B cell (primary cell): ENCODE measurements at regions of chr11 and their contacts with region 1.

Region 1: DNA sequence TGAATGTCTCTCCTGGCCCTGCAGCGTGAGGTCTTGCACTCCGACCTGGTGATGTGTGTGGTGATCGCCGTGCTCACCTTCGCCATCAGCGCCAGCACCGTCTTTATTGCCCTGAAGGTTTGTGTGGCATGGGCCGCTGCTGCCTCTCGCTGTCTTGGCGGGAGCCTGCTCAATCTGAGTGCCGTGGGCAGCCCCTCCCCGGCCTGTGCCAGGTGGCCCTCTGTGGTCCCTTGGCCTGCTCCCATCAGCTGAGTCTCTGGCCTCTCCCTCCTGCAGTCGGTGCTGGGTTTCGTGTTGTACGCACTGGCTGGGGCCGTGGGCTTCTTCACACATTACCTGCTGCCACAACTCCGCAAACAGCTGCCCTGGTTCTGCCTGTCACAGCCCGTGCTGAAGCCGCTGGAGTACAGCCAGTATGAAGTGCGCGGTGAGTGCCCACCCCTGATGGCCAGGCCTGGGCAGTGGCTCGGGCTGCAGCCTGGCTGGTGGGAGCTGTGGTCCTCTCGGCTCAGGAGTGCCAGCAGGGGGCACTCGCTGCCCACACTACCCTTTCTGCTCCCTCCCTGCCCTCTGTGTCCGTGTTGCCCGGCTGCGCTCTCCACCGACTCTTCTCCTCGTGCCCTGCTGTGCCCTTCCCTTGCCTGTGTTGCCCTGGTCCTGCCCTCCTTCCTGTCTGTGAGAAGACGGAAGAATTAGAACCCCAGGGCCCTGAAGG is 10.2 kb downstream of the PCNX3 start:
- DNase-seq: peak; percentile 84
- ATAC-seq: peak; percentile 95
- H3K4me3 ChIP-seq: no peak overlapping the region
- H3K4me3 Mint-ChIP-seq: no peak overlapping the region
- H3K27ac ChIP-seq: no peak overlapping the region
- H3K27ac Mint-ChIP-seq: peak overlapping the region; percentile 5
- H3K4me1 ChIP-seq: peaks cover 6 to 11% of the 10 kb centered on the region in 2 donors
- H3K4me1 Mint-ChIP-seq: peaks cover 12% of the 10 kb centered on the region
- H3K27me3 ChIP-seq: no peaks in the 10 kb centered on the region
- H3K27me3 Mint-ChIP-seq: no peaks in the 10 kb centered on the region
- CTCF ChIP-seq: peak; percentile 83

Region 2: DNA sequence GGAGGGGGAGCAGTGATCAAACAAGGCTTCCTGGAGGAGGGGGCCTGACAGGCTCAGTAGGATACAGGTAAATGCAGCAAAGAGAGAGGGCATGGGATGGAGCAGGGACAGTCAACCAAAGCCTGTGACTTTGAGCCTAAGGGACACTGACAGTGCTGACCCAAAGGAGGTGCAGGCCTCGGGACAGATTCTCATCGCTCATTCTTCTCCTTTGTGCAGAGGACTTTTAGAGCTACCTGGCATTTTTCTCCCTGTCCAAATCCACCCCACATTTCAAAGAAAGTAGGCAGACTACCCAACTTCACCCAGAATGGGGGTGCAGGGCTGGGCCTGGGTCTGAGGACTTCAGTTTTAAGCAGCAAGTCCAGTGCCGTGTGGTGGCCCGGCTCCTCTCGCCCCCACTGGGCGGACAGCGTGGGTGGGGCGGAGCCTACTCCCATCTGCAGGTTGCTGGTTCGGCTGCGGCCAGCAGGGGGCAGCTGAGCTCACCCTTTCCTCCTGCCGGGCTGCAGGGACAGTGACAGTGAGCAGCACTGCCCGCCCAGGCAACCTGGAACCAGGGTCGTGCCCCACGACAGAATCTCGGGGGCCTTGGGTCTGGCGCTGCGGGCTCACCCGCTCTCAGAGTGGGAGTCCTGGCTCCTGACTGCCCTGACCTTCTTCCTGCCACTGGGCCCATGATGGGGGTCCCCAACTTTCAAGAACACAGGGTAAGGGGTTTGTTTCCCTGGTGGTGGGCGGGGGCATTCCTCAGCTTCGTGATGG is 209.5 kb before region 1 on chr11:
- CTCF ChIA-PET with region 1: no interaction called
- POLR2A ChIA-PET with region 1: no interaction called
- intact Hi-C with region 1: no loop called
- DNase-seq: peak; percentile 91
- ATAC-seq: peak; percentile 42
- H3K4me3 ChIP-seq: peak overlapping the region; percentile 43 to 86 (median 63)
- H3K4me3 Mint-ChIP-seq: peak overlapping the region; percentile 96
- H3K27ac ChIP-seq: peak overlapping the region; percentile 91 to 97
- H3K27ac Mint-ChIP-seq: peak overlapping the region; percentile 100
- H3K4me1 ChIP-seq: peaks cover 54 to 61% of the 10 kb centered on the region in 2 donors
- H3K4me1 Mint-ChIP-seq: peaks cover 58% of the 10 kb centered on the region
- H3K27me3 ChIP-seq: no peaks in the 10 kb centered on the region
- H3K27me3 Mint-ChIP-seq: no peaks in the 10 kb centered on the region
- CTCF ChIP-seq: peak; percentile 92

Region 3: GRCh38 chr11:65558002-65558931 is 67.5 kb before region 1 on chr11 and contains the start of gene LTBP3:
- CTCF ChIA-PET with region 1: no interaction called
- POLR2A ChIA-PET with region 1: no interaction called
- intact Hi-C with region 1: no loop called
- DNase-seq: peak; percentile 52
- ATAC-seq: peak; percentile 60
- H3K4me3 ChIP-seq: peak within 1 kb of the TSS; percentile 22 to 62 (median 54)
- H3K4me3 Mint-ChIP-seq: peak within 1 kb of the TSS; percentile 81
- H3K27ac ChIP-seq: peak within 1 kb of the TSS; percentile 57 to 62
- H3K27ac Mint-ChIP-seq: peak within 1 kb of the TSS; percentile 68
- H3K4me1 ChIP-seq: peaks cover 11 to 33% of the 10 kb centered on the region in 2 donors
- H3K4me1 Mint-ChIP-seq: peaks cover 28% of the 10 kb centered on the region
- H3K27me3 ChIP-seq: no peaks in the 10 kb centered on the region
- H3K27me3 Mint-ChIP-seq: peaks cover 3% of the 10 kb centered on the region
- CTCF ChIP-seq: no peak
- total RNA-seq, gene LTBP3: 69.0 and 69.7 TPM in 2 replicates

Region 4: GRCh38 chr11:65652511-65653231 is 26.9 kb after region 1 on chr11:
- CTCF ChIA-PET with region 1: interaction called, 41 read pairs
- POLR2A ChIA-PET with region 1: interaction called, 4 read pairs
- intact Hi-C with region 1: loop called (anchors 1 kb)
- DNase-seq: peak; percentile 98
- ATAC-seq: peak; percentile 89
- H3K4me3 ChIP-seq: peak overlapping the region; percentile 22 to 74 (median 69)
- H3K4me3 Mint-ChIP-seq: peak overlapping the region; percentile 96
- H3K27ac ChIP-seq: peak overlapping the region; percentile 90 to 93
- H3K27ac Mint-ChIP-seq: peak overlapping the region; percentile 98
- H3K4me1 ChIP-seq: peaks cover 22 to 44% of the 10 kb centered on the region in 2 donors
- H3K4me1 Mint-ChIP-seq: peaks cover 57% of the 10 kb centered on the region
- H3K27me3 ChIP-seq: no peaks in the 10 kb centered on the region
- H3K27me3 Mint-ChIP-seq: no peaks in the 10 kb centered on the region
- CTCF ChIP-seq: no peak

Region 5: DNA sequence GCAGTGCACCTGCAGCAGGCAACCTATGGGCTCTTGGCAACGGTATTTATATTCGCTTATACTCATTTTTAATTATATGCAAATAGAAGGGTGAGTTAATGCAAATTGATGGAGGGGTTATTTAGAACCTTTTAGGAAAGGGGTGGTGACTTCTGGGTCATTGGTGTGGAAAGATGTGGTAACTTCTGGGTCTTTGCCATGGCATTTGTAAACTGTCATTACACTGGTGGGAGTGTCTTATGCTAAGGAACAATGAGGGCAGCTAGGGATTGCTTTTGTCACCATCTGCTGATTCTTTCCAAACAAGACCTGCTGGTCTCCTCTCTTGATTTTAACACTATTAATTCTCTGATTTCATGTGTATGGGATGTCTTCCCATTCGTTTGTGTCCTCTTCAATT is 74.6 kb after region 1 on chr11:
- CTCF ChIA-PET with region 1: interaction called, 32 read pairs
- POLR2A ChIA-PET with region 1: no interaction called
- intact Hi-C with region 1: no loop called
- DNase-seq: peak; percentile 48
- ATAC-seq: peak; percentile 76
- H3K4me3 ChIP-seq: no peak overlapping the region
- H3K4me3 Mint-ChIP-seq: no peak overlapping the region
- H3K27ac ChIP-seq: no peak overlapping the region
- H3K27ac Mint-ChIP-seq: no peak overlapping the region
- H3K4me1 ChIP-seq: peaks cover 5 to 7% of the 10 kb centered on the region in 2 donors
- H3K4me1 Mint-ChIP-seq: peaks cover 9% of the 10 kb centered on the region
- H3K27me3 ChIP-seq: no peaks in the 10 kb centered on the region
- H3K27me3 Mint-ChIP-seq: peaks cover 3% of the 10 kb centered on the region
- CTCF ChIP-seq: no peak

Region 6: DNA sequence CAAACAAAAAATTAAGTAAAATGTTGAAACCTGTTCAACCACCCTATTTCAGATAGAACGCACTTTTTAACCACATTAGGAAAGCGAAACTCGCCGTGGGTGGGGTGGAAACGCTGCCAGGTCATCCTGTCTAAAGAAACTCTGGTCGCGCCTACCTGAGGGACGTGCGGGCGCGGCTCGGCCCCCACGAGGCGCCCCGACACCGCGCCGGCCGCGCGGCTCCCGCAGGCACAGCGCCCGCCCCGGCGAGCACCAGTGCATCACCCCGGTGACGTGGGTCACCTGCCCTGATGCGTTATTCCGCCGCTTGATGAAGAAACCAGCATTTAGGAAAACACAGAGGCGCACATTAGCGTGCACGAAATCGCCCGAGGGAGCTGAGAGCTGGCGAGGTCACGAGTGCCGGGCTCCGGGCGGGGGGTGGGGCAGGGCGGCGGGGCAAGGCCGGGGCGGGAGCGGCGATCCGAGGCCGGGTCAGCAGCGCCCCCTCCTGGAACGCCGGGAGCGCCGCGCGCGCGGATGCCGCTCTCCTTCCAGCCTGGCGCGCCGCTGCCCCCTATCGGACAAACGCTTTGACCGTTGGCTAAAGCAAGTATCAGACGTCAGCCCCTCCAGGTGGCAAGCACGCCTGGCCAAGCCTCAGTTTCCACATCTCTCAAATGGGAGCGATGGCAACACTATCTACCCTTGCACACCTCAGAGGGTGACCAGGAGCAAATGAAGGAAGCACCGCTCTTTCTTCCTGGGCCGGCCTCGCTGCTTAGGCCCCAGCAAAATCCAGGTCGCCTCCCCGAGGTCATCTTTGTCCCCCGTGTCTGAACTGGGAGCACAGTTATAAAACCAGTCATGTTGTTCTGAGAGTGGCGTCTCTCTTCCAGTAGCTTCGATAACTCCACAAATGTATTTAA is 192.3 kb after region 1 on chr11:
- CTCF ChIA-PET with region 1: interaction called, 11 read pairs
- POLR2A ChIA-PET with region 1: interaction called, 4 read pairs
- intact Hi-C with region 1: loop called (anchors 1 kb)
- DNase-seq: peak; percentile 95
- ATAC-seq: peak; percentile 98
- H3K4me3 ChIP-seq: peak overlapping the region; percentile 43 to 66 (median 52)
- H3K4me3 Mint-ChIP-seq: peak overlapping the region; percentile 74
- H3K27ac ChIP-seq: peak overlapping the region; percentile 54 to 66
- H3K27ac Mint-ChIP-seq: peak overlapping the region; percentile 75
- H3K4me1 ChIP-seq: peaks cover 6 to 13% of the 10 kb centered on the region in 2 donors
- H3K4me1 Mint-ChIP-seq: peaks cover 9% of the 10 kb centered on the region
- H3K27me3 ChIP-seq: no peaks in the 10 kb centered on the region
- H3K27me3 Mint-ChIP-seq: no peaks in the 10 kb centered on the region
- CTCF ChIP-seq: peak; percentile 100